ENCODE measurements at regions of chr2 and their contacts with region 1.

Region 1: GRCh38 chr2:59025157-59025757 is 784.1 kb upstream of the FANCL start:
- DNase-seq: peak; percentile 28
- CTCF ChIP-seq: peak; percentile 78

Region 2: DNA sequence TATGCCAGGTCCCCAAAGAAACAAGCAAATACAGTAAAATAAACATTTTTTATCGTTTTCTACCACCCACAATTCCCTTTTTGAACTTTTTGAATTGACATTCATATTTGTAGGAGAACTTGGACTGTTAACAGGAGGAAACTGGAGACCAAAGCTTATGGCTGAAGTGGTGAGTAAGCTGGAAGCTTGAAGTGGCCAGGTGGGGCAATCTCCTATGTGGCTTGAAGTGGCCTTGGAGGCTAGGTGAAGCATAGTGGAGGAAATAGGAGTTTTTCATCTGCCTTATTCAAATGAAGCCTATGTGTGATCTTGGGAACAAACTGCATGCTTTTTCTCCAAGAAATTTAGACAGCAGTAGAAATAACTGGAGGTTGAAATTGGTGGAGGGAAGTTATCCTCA is 178.8 kb after region 1 on chr2:
- in situ Hi-C with region 1: no loop called
- DNase-seq: no peak
- CTCF ChIP-seq: no peak

Region 3: DNA sequence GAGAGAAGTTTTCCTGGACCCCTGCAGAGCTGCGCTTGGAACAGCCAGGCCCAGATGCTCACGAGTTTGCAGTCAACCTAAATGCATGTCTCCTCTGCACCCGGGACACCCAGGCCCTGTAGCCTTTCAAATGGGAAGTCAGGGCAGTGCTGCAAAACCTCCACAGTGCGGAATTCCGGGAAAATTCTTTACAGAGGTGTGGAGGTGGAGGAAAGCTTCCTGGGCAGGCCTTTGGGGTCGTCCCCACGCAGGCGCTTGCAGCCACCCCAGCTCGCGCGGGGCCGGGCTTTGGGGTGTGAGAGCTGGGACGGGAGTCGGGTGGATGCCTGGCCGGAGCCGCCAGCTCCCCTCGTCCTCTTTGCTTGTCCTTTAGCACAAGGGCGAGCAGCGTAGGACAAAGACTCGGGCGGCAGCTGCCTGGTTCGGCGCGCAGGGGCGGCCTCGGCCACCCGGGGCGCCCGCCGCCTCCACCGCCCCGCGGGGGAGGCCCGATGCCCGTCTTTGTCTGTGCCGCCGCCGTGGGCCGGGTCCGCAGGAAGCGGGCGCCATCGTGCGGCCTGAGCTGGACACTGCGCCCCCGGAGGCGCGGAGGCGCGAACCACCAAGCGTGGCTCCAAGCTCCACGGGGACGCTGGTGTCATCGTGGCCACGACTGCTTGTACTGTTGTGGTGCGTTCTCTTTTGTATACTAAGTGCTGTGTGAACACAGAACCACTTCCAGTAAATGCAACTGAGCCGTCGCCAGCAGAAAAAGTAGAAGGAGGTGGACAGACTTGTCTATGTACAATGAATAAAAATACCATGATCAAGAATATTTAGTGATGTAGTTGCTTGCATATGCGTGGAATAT is 1556.4 kb after region 1 on chr2:
- in situ Hi-C with region 1: loop called (anchors 25 kb)
- DNase-seq: peak; percentile 90
- CTCF ChIP-seq: peak; percentile 98

Measured in GM13976 (cell line).